MCF 10A (cell line): ENCODE measurements at regions of chr2 and their contacts with region 1.

Region 1: GRCh38 chr2:44479122-44479887 is 117.6 kb downstream of the CAMKMT start:
- DNase-seq: peak; percentile 86
- H3K4me3 Mint-ChIP-seq: no peak overlapping the region
- H3K27ac Mint-ChIP-seq: no peak overlapping the region
- H3K4me1 Mint-ChIP-seq: no peaks in the 10 kb centered on the region
- H3K27me3 Mint-ChIP-seq: no peaks in the 10 kb centered on the region
- CTCF ChIP-seq: peak; percentile 99

Region 2: GRCh38 chr2:44044281-44044720 is 435.0 kb before region 1 on chr2:
- CTCF ChIA-PET with region 1: interaction called, 12 read pairs
- POLR2A ChIA-PET with region 1: no interaction called
- intact Hi-C with region 1: loop called (anchors 1 kb)
- DNase-seq: peak; percentile 84
- H3K4me3 Mint-ChIP-seq: no peak overlapping the region
- H3K27ac Mint-ChIP-seq: no peak overlapping the region
- H3K4me1 Mint-ChIP-seq: no peaks in the 10 kb centered on the region
- H3K27me3 Mint-ChIP-seq: no peaks in the 10 kb centered on the region
- CTCF ChIP-seq: peak; percentile 87

Region 3: DNA sequence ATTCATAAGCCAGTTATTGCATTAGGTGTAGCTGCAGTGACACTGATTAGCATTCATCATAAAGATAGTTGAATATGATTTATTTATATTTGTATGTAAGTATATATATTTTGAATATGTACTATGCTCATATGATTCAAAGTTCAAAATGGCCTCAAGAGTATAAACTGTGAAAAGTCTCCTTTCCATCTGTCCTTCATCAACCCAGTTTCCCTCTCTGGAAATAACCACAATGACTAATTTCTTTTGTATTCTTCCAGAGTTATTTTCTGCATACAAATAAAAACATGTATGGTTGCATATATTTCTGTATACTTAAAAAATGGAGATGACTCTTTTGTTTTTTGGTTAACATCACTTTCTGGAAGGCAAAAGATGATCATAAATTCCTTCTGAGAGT is 22.4 kb before region 1 on chr2:
- CTCF ChIA-PET with region 1: interaction called, 12 read pairs
- POLR2A ChIA-PET with region 1: no interaction called
- intact Hi-C with region 1: no loop called
- DNase-seq: no peak
- H3K4me3 Mint-ChIP-seq: no peak overlapping the region
- H3K27ac Mint-ChIP-seq: no peak overlapping the region
- H3K4me1 Mint-ChIP-seq: no peaks in the 10 kb centered on the region
- H3K27me3 Mint-ChIP-seq: no peaks in the 10 kb centered on the region
- CTCF ChIP-seq: no peak

Region 4: GRCh38 chr2:44510246-44510645 is 30.9 kb after region 1 on chr2:
- CTCF ChIA-PET with region 1: interaction called, 12 read pairs
- POLR2A ChIA-PET with region 1: interaction called, 5 read pairs
- intact Hi-C with region 1: no loop called
- DNase-seq: no peak
- H3K4me3 Mint-ChIP-seq: no peak overlapping the region
- H3K27ac Mint-ChIP-seq: peak overlapping the region; percentile 18
- H3K4me1 Mint-ChIP-seq: peaks cover 11% of the 10 kb centered on the region
- H3K27me3 Mint-ChIP-seq: no peaks in the 10 kb centered on the region
- CTCF ChIP-seq: no peak

Region 5: GRCh38 chr2:44578421-44579135 is 99.3 kb after region 1 on chr2:
- CTCF ChIA-PET with region 1: interaction called, 12 read pairs
- POLR2A ChIA-PET with region 1: no interaction called
- intact Hi-C with region 1: no loop called
- DNase-seq: peak; percentile 97
- H3K4me3 Mint-ChIP-seq: peak overlapping the region; percentile 63
- H3K27ac Mint-ChIP-seq: peak overlapping the region; percentile 17
- H3K4me1 Mint-ChIP-seq: peaks cover 46% of the 10 kb centered on the region
- H3K27me3 Mint-ChIP-seq: no peaks in the 10 kb centered on the region
- CTCF ChIP-seq: no peak

Region 6: GRCh38 chr2:44778671-44779476 is 299.6 kb after region 1 on chr2:
- CTCF ChIA-PET with region 1: no interaction called
- POLR2A ChIA-PET with region 1: no interaction called
- intact Hi-C with region 1: no loop called
- DNase-seq: no peak
- H3K4me3 Mint-ChIP-seq: no peak overlapping the region
- H3K27ac Mint-ChIP-seq: no peak overlapping the region
- H3K4me1 Mint-ChIP-seq: no peaks in the 10 kb centered on the region
- H3K27me3 Mint-ChIP-seq: no peaks in the 10 kb centered on the region
- CTCF ChIP-seq: no peak

Region 7: GRCh38 chr2:44925561-44926136 is 446.3 kb after region 1 on chr2:
- CTCF ChIA-PET with region 1: interaction called, 10 read pairs
- POLR2A ChIA-PET with region 1: no interaction called
- intact Hi-C with region 1: no loop called
- DNase-seq: no peak
- H3K4me3 Mint-ChIP-seq: no peak overlapping the region
- H3K27ac Mint-ChIP-seq: no peak overlapping the region
- H3K4me1 Mint-ChIP-seq: no peaks in the 10 kb centered on the region
- H3K27me3 Mint-ChIP-seq: peaks cover 43% of the 10 kb centered on the region
- CTCF ChIP-seq: no peak